ENCODE measurements at regions of chr4 and their contacts with region 1.

Region 1: DNA sequence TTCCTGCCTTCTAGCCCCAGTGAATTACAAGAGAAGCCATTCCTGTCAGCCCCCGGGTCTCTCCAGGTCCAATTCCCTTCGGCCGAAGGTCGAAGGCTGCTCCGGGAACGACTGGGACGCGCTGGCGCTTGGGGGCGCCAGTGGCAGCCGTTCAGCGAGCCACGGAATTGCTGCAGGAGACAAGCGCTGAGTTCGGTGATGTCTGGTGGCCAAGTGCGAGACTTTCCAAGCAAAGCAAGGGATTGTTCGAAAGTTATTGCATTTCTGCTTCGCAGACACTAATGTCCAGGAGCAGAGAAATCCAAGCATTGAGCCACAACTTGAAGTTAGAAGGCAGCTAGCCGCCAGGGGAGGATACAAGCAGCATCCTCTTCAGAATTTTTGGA is 1.1 kb upstream of the DKK2 start:
- DNase-seq: no peak
- ATAC-seq: no peak
- H3K4me3 Mint-ChIP-seq: no peak overlapping the region
- H3K27ac Mint-ChIP-seq: no peak overlapping the region
- H3K4me1 Mint-ChIP-seq: peaks cover 12% of the 10 kb centered on the region
- H3K27me3 Mint-ChIP-seq: peaks cover 49% of the 10 kb centered on the region
- CTCF ChIP-seq: no peak

Region 2: GRCh38 chr4:107902715-107903114 is 865.5 kb after region 1 on chr4:
- CTCF ChIA-PET with region 1: no interaction called
- POLR2A ChIA-PET with region 1: no interaction called
- intact Hi-C with region 1: loop called (anchors 5 kb)
- DNase-seq: no peak
- ATAC-seq: no peak
- H3K4me3 Mint-ChIP-seq: no peak overlapping the region
- H3K27ac Mint-ChIP-seq: no peak overlapping the region
- H3K4me1 Mint-ChIP-seq: no peaks in the 10 kb centered on the region
- H3K27me3 Mint-ChIP-seq: peaks cover 24% of the 10 kb centered on the region
- CTCF ChIP-seq: no peak

Measured in activated B cell treated with CpG ODN at 0.5 μM for 24 hours (primary cell).